ENCODE measurements at regions of chr10 and their contacts with region 1.

Region 1: DNA sequence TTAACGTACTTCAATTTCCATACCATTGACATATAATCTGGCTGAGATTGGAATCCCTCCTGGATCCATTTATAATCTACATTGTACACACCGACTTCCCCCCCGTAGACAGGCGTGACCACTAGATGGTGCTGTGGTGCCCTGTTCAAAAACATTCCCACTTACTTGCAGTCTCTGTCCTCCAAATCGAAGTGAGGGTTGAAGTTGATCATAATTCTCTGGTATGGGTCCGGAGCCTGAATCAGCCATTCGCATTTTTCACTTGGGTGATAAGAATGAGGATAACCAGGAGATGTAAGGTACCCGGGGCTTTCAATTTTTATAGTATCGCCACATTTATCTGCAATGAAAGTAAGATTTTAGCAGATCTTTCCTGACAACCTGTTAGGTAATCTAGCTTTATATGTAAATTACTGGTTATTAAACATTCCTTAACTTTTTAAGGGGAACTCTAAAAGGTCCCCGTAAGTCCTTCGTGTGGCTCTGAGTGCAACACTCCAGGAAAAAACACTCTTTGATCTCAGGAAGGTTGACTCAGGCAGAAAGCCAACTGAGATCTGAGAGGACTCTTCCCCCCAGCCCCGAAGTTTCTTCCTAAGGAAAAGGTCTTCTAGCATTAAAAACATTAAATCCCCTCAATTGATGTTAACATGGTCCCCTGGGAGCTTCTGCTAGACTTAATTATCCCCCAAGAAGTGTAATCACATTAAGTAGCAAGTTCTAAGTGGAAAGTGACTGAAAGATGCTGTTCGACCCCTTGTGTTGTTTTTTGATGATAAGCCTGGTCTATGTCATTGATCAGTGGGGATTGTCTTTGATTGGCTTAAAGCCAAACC is 3.7 kb downstream of the NRP1 start:
- DNase-seq: peak; percentile 86
- H3K4me3 Mint-ChIP-seq: no peak overlapping the region
- H3K27ac Mint-ChIP-seq: no peak overlapping the region
- H3K4me1 Mint-ChIP-seq: peaks cover 18% of the 10 kb centered on the region
- H3K27me3 Mint-ChIP-seq: peaks cover 56% of the 10 kb centered on the region

Region 2: DNA sequence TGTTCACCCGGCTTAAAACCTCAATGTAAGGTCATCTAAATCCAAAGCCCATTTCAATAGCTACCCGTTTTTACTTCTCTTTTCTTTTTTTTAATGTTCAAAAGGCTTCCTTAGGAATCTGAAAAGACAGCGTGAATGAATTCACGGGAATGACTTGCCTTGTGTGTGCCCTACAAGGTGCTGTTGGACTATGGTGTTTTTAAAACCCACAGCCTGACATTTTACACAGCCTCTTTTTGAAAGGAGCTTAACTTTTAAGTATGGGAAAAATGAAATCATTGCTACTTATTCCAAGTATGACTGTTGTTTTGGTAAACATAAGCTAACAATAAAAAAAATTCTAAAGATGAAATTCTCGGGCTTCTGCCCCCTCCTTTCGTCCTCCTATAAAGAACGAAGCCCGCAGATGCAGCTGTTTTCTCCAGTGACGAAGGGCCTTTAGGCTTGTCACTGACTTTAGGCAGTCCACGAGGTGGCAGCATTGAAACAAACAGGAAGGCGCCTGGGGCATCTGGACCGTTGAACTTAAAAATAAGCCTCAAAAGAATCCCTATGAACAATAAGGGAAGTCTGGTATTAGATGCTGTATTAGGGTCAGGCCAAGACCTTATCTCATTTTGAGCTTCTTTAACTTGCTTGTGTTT is 137.6 kb before region 1 on chr10:
- CTCF ChIA-PET with region 1: interaction called, 24 read pairs
- POLR2A ChIA-PET with region 1: no interaction called
- intact Hi-C with region 1: loop called (anchors 1 kb)
- DNase-seq: peak; percentile 84
- H3K4me3 Mint-ChIP-seq: no peak overlapping the region
- H3K27ac Mint-ChIP-seq: no peak overlapping the region
- H3K4me1 Mint-ChIP-seq: peaks cover 5% of the 10 kb centered on the region
- H3K27me3 Mint-ChIP-seq: peaks cover 8% of the 10 kb centered on the region

Region 3: GRCh38 chr10:33345236-33345635 is 14.5 kb after region 1 on chr10:
- CTCF ChIA-PET with region 1: interaction called, 10 read pairs
- POLR2A ChIA-PET with region 1: interaction called, 3 read pairs
- intact Hi-C with region 1: no loop called
- DNase-seq: no peak
- H3K4me3 Mint-ChIP-seq: no peak overlapping the region
- H3K27ac Mint-ChIP-seq: no peak overlapping the region
- H3K4me1 Mint-ChIP-seq: peaks cover 9% of the 10 kb centered on the region
- H3K27me3 Mint-ChIP-seq: peaks cover 31% of the 10 kb centered on the region

Region 4: DNA sequence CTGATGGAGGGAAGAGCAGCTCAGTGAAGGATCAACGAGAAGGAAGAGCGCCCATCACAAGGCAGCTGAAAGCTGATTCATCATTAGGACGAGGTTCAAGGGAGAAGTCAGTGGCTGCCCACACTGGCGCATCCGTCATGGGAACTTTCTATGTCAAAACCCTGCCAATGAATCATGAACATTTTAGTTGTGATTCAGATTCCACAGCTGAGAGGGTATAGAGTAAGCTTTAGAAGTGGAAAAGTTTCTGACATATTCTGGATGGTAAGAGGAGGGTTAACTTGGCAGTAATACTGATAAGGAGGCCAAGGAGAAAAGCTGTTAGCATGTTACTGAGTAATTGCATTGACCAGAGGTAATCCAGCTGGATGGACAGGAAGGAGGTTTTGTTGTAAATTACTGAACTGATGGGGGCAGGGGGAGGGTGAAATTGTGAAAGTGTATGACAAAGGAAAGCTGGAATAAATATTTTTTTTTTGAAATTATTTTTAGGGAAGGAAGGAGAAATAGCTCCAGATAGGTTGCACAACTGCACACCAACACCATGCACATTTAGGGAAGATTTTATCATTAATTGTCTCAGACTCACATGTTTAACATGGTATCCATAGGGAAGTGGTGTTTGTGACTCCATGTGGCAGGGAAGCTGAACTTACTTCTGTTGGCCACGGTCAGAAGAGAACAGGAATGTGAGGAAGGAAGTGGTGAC is 82.0 kb after region 1 on chr10:
- CTCF ChIA-PET with region 1: no interaction called
- POLR2A ChIA-PET with region 1: no interaction called
- intact Hi-C with region 1: loop called (anchors 10 kb)
- DNase-seq: peak; percentile 36
- H3K4me3 Mint-ChIP-seq: no peak overlapping the region
- H3K27ac Mint-ChIP-seq: no peak overlapping the region
- H3K4me1 Mint-ChIP-seq: peaks cover 2% of the 10 kb centered on the region
- H3K27me3 Mint-ChIP-seq: peaks cover 41% of the 10 kb centered on the region

Region 5: GRCh38 chr10:34121781-34122628 is 791.2 kb after region 1 on chr10:
- CTCF ChIA-PET with region 1: no interaction called
- POLR2A ChIA-PET with region 1: no interaction called
- intact Hi-C with region 1: loop called (anchors 10 kb)
- DNase-seq: peak; percentile 18
- H3K4me3 Mint-ChIP-seq: no peak overlapping the region
- H3K27ac Mint-ChIP-seq: no peak overlapping the region
- H3K4me1 Mint-ChIP-seq: peaks cover 24% of the 10 kb centered on the region
- H3K27me3 Mint-ChIP-seq: peaks cover 3% of the 10 kb centered on the region

Measured in activated CD4-positive, alpha-beta memory T cell treated with anti-CD3 and anti-CD28 coated beads for 36 hours (primary cell).